Activated naive CD4-positive, alpha-beta T cell treated with anti-CD3 and anti-CD28 coated beads for 36 hours (primary cell): ENCODE measurements at regions of chr3 and their contacts with region 1.

Region 1: GRCh38 chr3:173096994-173097785 is 43.8 kb downstream of the SPATA16 start:
- DNase-seq: no peak
- H3K4me3 Mint-ChIP-seq: no peak overlapping the region
- H3K27ac Mint-ChIP-seq: no peak overlapping the region
- H3K4me1 Mint-ChIP-seq: no peaks in the 10 kb centered on the region
- H3K27me3 Mint-ChIP-seq: no peaks in the 10 kb centered on the region

Region 2: GRCh38 chr3:172885704-172886103 is 211.5 kb before region 1 on chr3:
- CTCF ChIA-PET with region 1: no interaction called
- intact Hi-C with region 1: loop called (anchors 10 kb)
- DNase-seq: no peak
- H3K4me3 Mint-ChIP-seq: no peak overlapping the region
- H3K27ac Mint-ChIP-seq: no peak overlapping the region
- H3K4me1 Mint-ChIP-seq: no peaks in the 10 kb centered on the region
- H3K27me3 Mint-ChIP-seq: no peaks in the 10 kb centered on the region

Region 3: GRCh38 chr3:172946061-172946460 is 151.1 kb before region 1 on chr3:
- CTCF ChIA-PET with region 1: no interaction called
- intact Hi-C with region 1: no loop called
- DNase-seq: no peak
- H3K4me3 Mint-ChIP-seq: no peak overlapping the region
- H3K27ac Mint-ChIP-seq: no peak overlapping the region
- H3K4me1 Mint-ChIP-seq: no peaks in the 10 kb centered on the region
- H3K27me3 Mint-ChIP-seq: no peaks in the 10 kb centered on the region

Region 4: GRCh38 chr3:172965256-172965655 is 131.9 kb before region 1 on chr3:
- CTCF ChIA-PET with region 1: no interaction called
- intact Hi-C with region 1: no loop called
- DNase-seq: no peak
- H3K4me3 Mint-ChIP-seq: no peak overlapping the region
- H3K27ac Mint-ChIP-seq: no peak overlapping the region
- H3K4me1 Mint-ChIP-seq: no peaks in the 10 kb centered on the region
- H3K27me3 Mint-ChIP-seq: no peaks in the 10 kb centered on the region